ENCODE measurements at regions of chr2 and their contacts with region 1.

Region 1: DNA sequence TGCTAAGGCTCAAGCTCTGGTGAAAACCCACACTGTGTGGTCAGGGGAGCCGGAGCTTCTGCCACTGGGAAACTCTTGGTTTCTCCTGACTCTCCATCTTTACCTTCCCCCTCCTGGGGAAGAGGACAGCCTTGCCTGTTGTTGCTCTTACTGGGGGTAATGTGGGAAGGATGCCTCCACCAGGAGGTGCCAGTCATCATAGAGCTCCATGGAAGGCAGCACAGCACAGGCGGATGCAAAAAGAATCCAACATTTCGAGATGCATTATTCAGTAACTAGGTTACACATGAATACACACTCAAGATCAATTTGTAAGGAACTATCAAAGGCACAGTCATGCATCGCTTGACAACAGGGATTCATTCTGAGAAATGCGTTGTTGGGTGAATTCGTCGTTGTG is 322.6 kb downstream of the AFF3 start:
- DNase-seq: no peak
- H3K4me3 ChIP-seq: no peak overlapping the region
- H3K27ac ChIP-seq: no peak overlapping the region
- H3K4me1 ChIP-seq: no peaks in the 10 kb centered on the region
- H3K27me3 ChIP-seq: no peaks in the 10 kb centered on the region
- CTCF ChIP-seq: no peak

Region 2: DNA sequence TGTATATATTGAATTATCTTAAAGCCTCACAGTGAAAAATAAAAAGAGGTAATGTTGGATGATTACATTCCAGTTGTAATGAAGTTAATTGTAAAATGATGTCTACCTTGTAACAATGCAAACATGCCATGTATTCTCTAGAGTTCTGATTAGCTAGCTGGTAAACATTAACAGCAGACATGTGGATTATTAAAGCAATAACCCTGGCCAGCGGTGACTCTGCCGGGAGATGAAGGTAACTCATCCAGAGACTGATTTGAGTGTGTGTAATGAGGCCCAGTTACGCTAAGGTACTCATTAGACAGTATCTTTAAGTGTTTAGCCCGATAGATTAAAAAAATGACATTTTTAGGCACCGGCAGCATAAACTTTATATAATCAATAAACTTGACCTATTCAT is 250.4 kb before region 1 on chr2:
- intact Hi-C with region 1: loop called (anchors 10 kb)
- DNase-seq: no peak
- H3K4me3 ChIP-seq: no peak overlapping the region
- H3K27ac ChIP-seq: no peak overlapping the region
- H3K4me1 ChIP-seq: peaks cover 0 to 3% of the 10 kb centered on the region in 2 donors
- H3K27me3 ChIP-seq: no peaks in the 10 kb centered on the region
- CTCF ChIP-seq: no peak

Region 3: GRCh38 chr2:101076581-101076980 is 1256.8 kb after region 1 on chr2:
- intact Hi-C with region 1: no loop called
- DNase-seq: no peak
- H3K4me3 ChIP-seq: no peak overlapping the region
- H3K27ac ChIP-seq: no peak overlapping the region
- H3K4me1 ChIP-seq: no peaks in the 10 kb centered on the region
- H3K27me3 ChIP-seq: no peaks in the 10 kb centered on the region
- CTCF ChIP-seq: no peak